CD4-positive, alpha-beta T cell (primary cell): ENCODE measurements at regions of chr16 and their contacts with region 1.

Region 1: GRCh38 chr16:48609652-48610029 is 339 bp downstream of the N4BP1 start:
- DNase-seq: no peak
- ATAC-seq: peak; percentile 13
- H3K4me3 ChIP-seq: peak overlapping the region; percentile 92
- H3K4me3 Mint-ChIP-seq: no peak overlapping the region
- H3K27ac ChIP-seq: peak overlapping the region; percentile 67 to 87
- H3K27ac Mint-ChIP-seq: peak overlapping the region; percentile 95
- H3K4me1 ChIP-seq: peaks cover 84% of the 10 kb centered on the region
- H3K4me1 Mint-ChIP-seq: peaks cover 52% of the 10 kb centered on the region
- H3K27me3 ChIP-seq: no peaks in the 10 kb centered on the region
- H3K27me3 Mint-ChIP-seq: no peaks in the 10 kb centered on the region
- CTCF ChIP-seq: no peak

Region 2: GRCh38 chr16:47460711-47461597 is 1148.7 kb before region 1 on chr16 and contains the starts of genes ITFG1 and PHKB:
- CTCF ChIA-PET with region 1: no interaction called
- POLR2A ChIA-PET with region 1: no interaction called
- intact Hi-C with region 1: loop called in 1 of 2 experiments (anchors 10 kb)
- DNase-seq: peak; percentile 89 to 98 (median 94)
- ATAC-seq: peak; percentile 96
- H3K4me3 ChIP-seq: peak within 1 kb of the TSS; percentile 79
- H3K4me3 Mint-ChIP-seq: peak within 1 kb of the TSS; percentile 89
- H3K27ac ChIP-seq: peak within 1 kb of the TSS; percentile 87 to 93
- H3K27ac Mint-ChIP-seq: peak within 1 kb of the TSS; percentile 87
- H3K4me1 ChIP-seq: peaks cover 26% of the 10 kb centered on the region
- H3K4me1 Mint-ChIP-seq: peaks cover 70% of the 10 kb centered on the region
- H3K27me3 ChIP-seq: no peaks in the 10 kb centered on the region
- H3K27me3 Mint-ChIP-seq: no peaks in the 10 kb centered on the region
- CTCF ChIP-seq: no peak
- total RNA-seq, gene ITFG1: 18.0 to 18.5 TPM
- total RNA-seq, gene PHKB: 28.8 to 31.3 TPM

Region 3: GRCh38 chr16:48365581-48366164 is 244.0 kb before region 1 on chr16:
- CTCF ChIA-PET with region 1: no interaction called
- POLR2A ChIA-PET with region 1: interaction called, 46 read pairs
- intact Hi-C with region 1: loop called in 1 of 2 experiments (anchors 1 kb)
- DNase-seq: peak; percentile 49 to 86 (median 68)
- ATAC-seq: peak; percentile 82
- H3K4me3 ChIP-seq: peak overlapping the region; percentile 67
- H3K4me3 Mint-ChIP-seq: peak overlapping the region; percentile 100
- H3K27ac ChIP-seq: peak overlapping the region; percentile 81
- H3K27ac Mint-ChIP-seq: peak overlapping the region; percentile 98
- H3K4me1 ChIP-seq: peaks cover 17% of the 10 kb centered on the region
- H3K4me1 Mint-ChIP-seq: peaks cover 55% of the 10 kb centered on the region
- H3K27me3 ChIP-seq: no peaks in the 10 kb centered on the region
- H3K27me3 Mint-ChIP-seq: no peaks in the 10 kb centered on the region
- CTCF ChIP-seq: no peak

Region 4: GRCh38 chr16:48556913-48557351 is 52.7 kb before region 1 on chr16:
- CTCF ChIA-PET with region 1: no interaction called
- POLR2A ChIA-PET with region 1: interaction called, 3 read pairs
- intact Hi-C with region 1: loop called in 1 of 2 experiments (anchors 5 kb)
- DNase-seq: peak in 3 of 14 experiments; percentile 30 to 55 (median 50)
- ATAC-seq: peak; percentile 16
- H3K4me3 ChIP-seq: no peak overlapping the region
- H3K4me3 Mint-ChIP-seq: peak overlapping the region; percentile 31
- H3K27ac ChIP-seq: no peak overlapping the region
- H3K27ac Mint-ChIP-seq: peak overlapping the region; percentile 8
- H3K4me1 ChIP-seq: peaks cover 24% of the 10 kb centered on the region
- H3K4me1 Mint-ChIP-seq: peaks cover 82% of the 10 kb centered on the region
- H3K27me3 ChIP-seq: no peaks in the 10 kb centered on the region
- H3K27me3 Mint-ChIP-seq: no peaks in the 10 kb centered on the region
- CTCF ChIP-seq: no peak

Region 5: DNA sequence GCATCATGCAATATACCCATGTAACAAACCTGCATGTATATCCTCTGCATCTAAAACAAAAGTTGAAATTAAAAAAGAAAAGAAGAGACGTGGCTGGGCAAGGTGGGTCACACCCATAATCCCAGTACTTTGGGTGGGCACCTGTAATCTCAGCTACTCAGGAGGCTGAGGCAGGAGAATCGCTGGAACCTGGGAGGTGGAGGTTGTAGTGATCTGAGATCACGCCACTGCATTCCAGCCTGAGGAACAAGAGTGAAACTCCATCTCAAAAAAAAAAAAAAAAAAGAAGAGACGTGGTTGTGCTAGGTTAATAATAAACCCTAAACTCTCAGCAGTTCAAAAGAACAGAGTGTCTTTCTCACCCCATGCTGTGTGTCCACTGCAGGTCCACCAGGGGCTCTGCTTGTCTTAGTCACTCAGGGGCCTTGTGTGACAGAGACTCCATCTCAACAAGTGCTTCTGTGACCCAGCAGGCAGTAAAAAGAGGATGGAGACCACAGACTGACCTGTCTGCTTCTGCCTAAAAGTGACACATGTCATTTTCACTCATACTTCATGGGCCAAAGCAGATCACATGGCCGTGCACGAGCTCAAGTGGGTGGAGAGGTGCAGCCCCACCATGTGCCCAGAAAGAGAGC is 22.6 kb after region 1 on chr16:
- CTCF ChIA-PET with region 1: interaction called, 18 read pairs
- POLR2A ChIA-PET with region 1: interaction called, 4 read pairs
- intact Hi-C with region 1: no loop called
- DNase-seq: no peak
- ATAC-seq: no peak
- H3K4me3 ChIP-seq: no peak overlapping the region
- H3K4me3 Mint-ChIP-seq: no peak overlapping the region
- H3K27ac ChIP-seq: no peak overlapping the region
- H3K27ac Mint-ChIP-seq: no peak overlapping the region
- H3K4me1 ChIP-seq: peaks cover 9% of the 10 kb centered on the region
- H3K4me1 Mint-ChIP-seq: peaks cover 8% of the 10 kb centered on the region
- H3K27me3 ChIP-seq: no peaks in the 10 kb centered on the region
- H3K27me3 Mint-ChIP-seq: peaks cover 3% of the 10 kb centered on the region
- CTCF ChIP-seq: no peak

Region 6: GRCh38 chr16:48687421-48688038 is 77.9 kb after region 1 on chr16:
- CTCF ChIA-PET with region 1: no interaction called
- POLR2A ChIA-PET with region 1: no interaction called
- intact Hi-C with region 1: no loop called
- DNase-seq: peak in 6 of 14 experiments; percentile 1 to 40 (median 12)
- ATAC-seq: no peak
- H3K4me3 ChIP-seq: no peak overlapping the region
- H3K4me3 Mint-ChIP-seq: no peak overlapping the region
- H3K27ac ChIP-seq: no peak overlapping the region
- H3K27ac Mint-ChIP-seq: no peak overlapping the region
- H3K4me1 ChIP-seq: peaks cover 3% of the 10 kb centered on the region
- H3K4me1 Mint-ChIP-seq: no peaks in the 10 kb centered on the region
- H3K27me3 ChIP-seq: peaks cover 0 to 8% of the 10 kb centered on the region in 2 experiments
- H3K27me3 Mint-ChIP-seq: peaks cover 25% of the 10 kb centered on the region
- CTCF ChIP-seq: peak; percentile 30